Activated B cell treated with CpG ODN at 0.5 μM for 24 hours (primary cell): ENCODE measurements at regions of chr11 and their contacts with region 1.

Region 1: GRCh38 chr11:128290106-128290840 is 297.1 kb downstream of the ETS1 start:
- DNase-seq: peak; percentile 67
- ATAC-seq: peak; percentile 75
- H3K4me3 Mint-ChIP-seq: peak overlapping the region; percentile 85
- H3K27ac Mint-ChIP-seq: peak overlapping the region; percentile 99
- H3K4me1 Mint-ChIP-seq: peaks cover 97% of the 10 kb centered on the region
- H3K27me3 Mint-ChIP-seq: no peaks in the 10 kb centered on the region
- CTCF ChIP-seq: no peak

Region 2: DNA sequence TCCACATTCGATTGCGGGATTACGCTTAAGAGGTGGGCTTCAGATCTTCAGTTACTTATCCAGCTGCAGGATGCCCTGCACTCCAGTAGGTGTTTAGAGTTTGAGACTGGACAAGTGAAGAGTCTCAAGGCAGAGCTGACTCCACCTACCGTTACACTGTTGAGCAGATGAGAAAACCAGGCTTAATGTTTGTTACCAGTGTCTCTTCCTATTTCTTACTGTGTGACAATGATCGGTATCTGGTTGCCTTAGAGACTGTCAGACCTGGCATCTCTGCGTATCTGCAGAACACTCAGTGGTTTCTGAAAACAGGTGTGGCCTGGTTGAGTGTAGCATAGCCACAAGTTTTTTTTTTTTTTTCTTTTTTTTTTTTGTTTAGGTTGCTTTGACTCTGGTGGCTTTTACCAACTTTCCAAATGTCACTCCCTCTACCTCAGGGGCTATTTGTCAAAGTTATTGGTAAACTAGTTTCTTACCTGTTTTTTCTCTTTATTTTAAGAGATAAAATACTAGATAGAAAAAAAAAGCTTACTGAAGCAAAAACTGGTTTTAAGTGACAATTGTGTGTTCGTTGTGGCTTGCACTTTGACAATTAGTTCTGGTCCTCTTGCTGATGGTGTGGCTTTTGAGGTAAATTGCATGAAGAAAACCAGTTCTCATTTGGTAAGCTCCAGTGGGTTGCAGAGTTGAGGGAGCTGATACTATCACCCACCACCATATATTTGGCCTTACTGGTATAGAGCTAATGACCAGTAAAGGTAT is 12.3 kb after region 1 on chr11:
- CTCF ChIA-PET with region 1: interaction called, 4 read pairs
- POLR2A ChIA-PET with region 1: interaction called, 6 read pairs
- intact Hi-C with region 1: loop called (anchors 1 kb)
- DNase-seq: no peak
- ATAC-seq: peak; percentile 89
- H3K4me3 Mint-ChIP-seq: peak overlapping the region; percentile 21
- H3K27ac Mint-ChIP-seq: peak overlapping the region; percentile 81
- H3K4me1 Mint-ChIP-seq: peaks cover 73% of the 10 kb centered on the region
- H3K27me3 Mint-ChIP-seq: no peaks in the 10 kb centered on the region
- CTCF ChIP-seq: no peak

Region 3: GRCh38 chr11:128399251-128400121 is 109.2 kb after region 1 on chr11:
- CTCF ChIA-PET with region 1: no interaction called
- POLR2A ChIA-PET with region 1: interaction called, 25 read pairs
- intact Hi-C with region 1: loop called (anchors 1 kb)
- DNase-seq: no peak
- ATAC-seq: peak; percentile 81
- H3K4me3 Mint-ChIP-seq: peak overlapping the region; percentile 40
- H3K27ac Mint-ChIP-seq: peak overlapping the region; percentile 91
- H3K4me1 Mint-ChIP-seq: peaks cover 29% of the 10 kb centered on the region
- H3K27me3 Mint-ChIP-seq: no peaks in the 10 kb centered on the region
- CTCF ChIP-seq: no peak

Region 4: DNA sequence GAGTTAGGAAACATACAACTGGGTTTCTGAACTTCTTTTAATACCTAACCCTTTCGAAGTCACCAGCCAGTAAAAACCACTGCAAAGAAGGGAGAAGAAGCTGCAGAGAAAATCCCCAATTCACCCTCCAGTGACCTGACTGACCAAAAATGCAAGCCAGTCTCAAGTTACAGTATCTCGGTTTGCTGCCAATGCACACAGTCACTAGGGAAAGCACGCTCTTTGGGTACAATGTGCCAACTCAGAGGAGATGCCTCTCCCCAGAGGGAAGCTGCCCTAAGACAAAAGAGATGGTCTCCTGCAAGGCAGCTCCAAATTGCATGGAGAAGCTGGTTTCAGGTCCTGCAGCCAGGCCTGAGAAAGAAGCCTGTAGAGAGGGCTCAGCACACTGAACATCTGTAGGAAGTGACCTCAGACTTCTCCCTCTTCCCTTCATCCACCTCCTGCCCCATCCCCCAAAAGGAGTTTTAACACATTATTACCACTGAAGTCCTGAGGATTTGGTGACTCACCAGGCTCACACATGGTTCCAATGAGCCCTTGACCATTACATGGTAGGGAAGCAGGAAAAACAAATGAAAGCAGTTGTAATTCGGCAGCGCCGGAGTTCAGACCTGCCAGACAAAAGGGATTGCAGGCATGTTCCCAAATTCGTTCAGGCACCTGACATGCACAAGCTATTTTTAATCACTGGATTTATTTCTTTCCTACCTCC is 206.9 kb after region 1 on chr11:
- CTCF ChIA-PET with region 1: interaction called, 7 read pairs
- POLR2A ChIA-PET with region 1: interaction called, 7 read pairs
- intact Hi-C with region 1: loop called (anchors 1 kb)
- DNase-seq: peak; percentile 43
- ATAC-seq: peak; percentile 92
- H3K4me3 Mint-ChIP-seq: peak overlapping the region; percentile 78
- H3K27ac Mint-ChIP-seq: peak overlapping the region; percentile 93
- H3K4me1 Mint-ChIP-seq: peaks cover 98% of the 10 kb centered on the region
- H3K27me3 Mint-ChIP-seq: no peaks in the 10 kb centered on the region
- CTCF ChIP-seq: no peak

Region 5: GRCh38 chr11:128552783-128553661 is 262.7 kb after region 1 on chr11:
- CTCF ChIA-PET with region 1: interaction called, 21 read pairs
- POLR2A ChIA-PET with region 1: interaction called, 56 read pairs
- intact Hi-C with region 1: loop called (anchors 1 kb)
- DNase-seq: peak; percentile 47
- ATAC-seq: peak; percentile 78
- H3K4me3 Mint-ChIP-seq: peak overlapping the region; percentile 73
- H3K27ac Mint-ChIP-seq: peak overlapping the region; percentile 98
- H3K4me1 Mint-ChIP-seq: peaks cover 72% of the 10 kb centered on the region
- H3K27me3 Mint-ChIP-seq: no peaks in the 10 kb centered on the region
- CTCF ChIP-seq: no peak

Region 6: DNA sequence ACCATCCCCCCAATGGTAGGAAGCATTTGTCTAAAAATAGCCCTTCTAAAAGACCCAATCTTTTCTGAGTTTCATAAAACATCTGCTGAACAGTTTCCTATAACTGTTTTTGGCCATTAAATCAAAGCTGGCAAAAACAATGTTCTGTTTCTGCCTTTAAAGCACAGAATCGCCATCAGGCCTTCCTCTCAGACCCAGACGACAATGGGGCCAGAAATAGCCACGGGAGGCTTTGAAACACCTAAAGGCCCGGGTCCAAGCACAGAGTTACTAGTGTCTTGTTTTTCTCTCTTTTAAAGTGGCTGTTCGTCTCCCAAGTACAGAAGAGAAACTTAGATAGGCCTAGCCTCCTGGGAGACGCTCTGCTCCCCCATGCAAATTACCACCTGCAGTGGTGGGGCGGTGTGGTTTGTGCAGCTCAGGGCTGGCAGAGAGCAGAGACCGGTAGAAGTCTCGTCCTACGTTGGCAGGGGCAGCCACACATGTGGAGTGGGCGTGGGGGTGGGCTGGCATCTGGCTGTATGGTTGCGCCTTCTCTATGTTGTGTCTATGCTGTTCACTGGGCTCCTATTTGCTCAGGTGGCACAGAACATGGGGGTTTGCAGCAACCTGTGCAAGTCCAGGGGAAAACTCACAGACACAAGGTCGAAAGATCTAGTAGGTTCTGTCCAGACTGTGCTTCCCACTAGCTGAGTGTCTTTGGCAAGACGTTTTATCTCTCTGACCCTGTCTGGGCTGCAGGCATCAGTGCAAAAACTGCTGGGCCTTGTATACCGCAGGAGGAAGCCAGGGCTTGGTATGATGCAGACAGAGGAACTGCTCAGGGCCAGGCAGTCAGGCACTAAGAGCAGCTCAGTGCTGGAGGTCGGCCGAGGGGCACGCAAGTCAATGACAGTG is 320.7 kb after region 1 on chr11:
- CTCF ChIA-PET with region 1: interaction called, 18 read pairs
- POLR2A ChIA-PET with region 1: interaction called, 37 read pairs
- intact Hi-C with region 1: loop called (anchors 1 kb)
- DNase-seq: peak; percentile 79
- ATAC-seq: peak; percentile 87
- H3K4me3 Mint-ChIP-seq: peak overlapping the region; percentile 79
- H3K27ac Mint-ChIP-seq: peak overlapping the region; percentile 94
- H3K4me1 Mint-ChIP-seq: peaks cover 93% of the 10 kb centered on the region
- H3K27me3 Mint-ChIP-seq: no peaks in the 10 kb centered on the region
- CTCF ChIP-seq: no peak

Region 7: GRCh38 chr11:128831174-128832120 is 541.2 kb after region 1 on chr11:
- CTCF ChIA-PET with region 1: interaction called, 13 read pairs
- POLR2A ChIA-PET with region 1: no interaction called
- intact Hi-C with region 1: loop called (anchors 1 kb)
- DNase-seq: peak; percentile 75
- ATAC-seq: peak; percentile 92
- H3K4me3 Mint-ChIP-seq: peak overlapping the region; percentile 70
- H3K27ac Mint-ChIP-seq: peak overlapping the region; percentile 91
- H3K4me1 Mint-ChIP-seq: peaks cover 80% of the 10 kb centered on the region
- H3K27me3 Mint-ChIP-seq: no peaks in the 10 kb centered on the region
- CTCF ChIP-seq: no peak